HCT116 (cell line): ENCODE measurements at regions of chr11 and their contacts with region 1.

Region 1: DNA sequence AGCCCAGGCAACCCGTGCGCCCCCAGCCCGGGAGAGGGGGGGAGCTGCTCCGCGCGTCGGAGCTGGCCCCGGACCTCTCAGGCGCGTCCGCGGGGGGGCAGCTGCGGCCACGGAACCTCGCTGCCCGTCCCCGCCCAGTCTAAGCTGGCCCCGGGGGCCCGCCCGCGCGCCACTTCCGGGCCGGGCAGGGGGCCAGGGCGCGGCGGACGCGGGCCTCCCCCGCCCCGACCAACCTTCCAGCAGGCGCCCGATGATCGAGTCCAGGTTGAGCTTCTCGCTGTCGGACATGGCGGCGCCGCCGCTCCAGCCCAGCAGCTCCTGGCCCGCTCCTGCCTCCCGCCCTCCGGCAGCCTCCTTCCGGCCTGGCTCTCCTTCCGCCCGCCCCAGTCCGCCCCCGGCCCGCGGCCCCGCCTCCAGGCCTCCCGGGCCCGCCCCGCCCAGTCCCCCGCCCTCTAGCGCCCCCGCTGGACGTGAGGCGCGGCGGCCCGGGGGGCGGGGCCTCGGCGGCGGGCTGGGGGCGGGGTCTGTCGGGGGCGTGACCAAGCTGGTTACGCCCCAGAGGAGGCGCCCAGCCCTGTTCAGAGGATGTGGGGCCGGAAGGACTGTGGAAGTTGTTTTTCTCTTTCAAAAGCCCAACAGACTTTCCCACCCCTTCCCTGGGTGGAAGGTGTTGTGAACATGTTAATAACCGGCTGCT is at the start of gene PPP1CA:
- DNase-seq: peak; percentile 53
- ATAC-seq: peak; percentile 90
- H3K4me3 ChIP-seq: peak within 1 kb of the TSS; percentile 82 to 90
- H3K27ac ChIP-seq: peak within 1 kb of the TSS; percentile 99
- H3K4me1 ChIP-seq: peaks cover 9 to 18% of the 10 kb centered on the region in 2 experiments
- H3K27me3 ChIP-seq: no peaks in the 10 kb centered on the region
- CTCF ChIP-seq: peak in 1 of 3 experiments; percentile 33; a peak in 3 of 6 replicates
- POLR2A ChIP-seq: peak; percentile 24
- RAD21 ChIP-seq: peak; percentile 48
- total RNA-seq, gene PPP1CA: 238 TPM

Region 2: DNA sequence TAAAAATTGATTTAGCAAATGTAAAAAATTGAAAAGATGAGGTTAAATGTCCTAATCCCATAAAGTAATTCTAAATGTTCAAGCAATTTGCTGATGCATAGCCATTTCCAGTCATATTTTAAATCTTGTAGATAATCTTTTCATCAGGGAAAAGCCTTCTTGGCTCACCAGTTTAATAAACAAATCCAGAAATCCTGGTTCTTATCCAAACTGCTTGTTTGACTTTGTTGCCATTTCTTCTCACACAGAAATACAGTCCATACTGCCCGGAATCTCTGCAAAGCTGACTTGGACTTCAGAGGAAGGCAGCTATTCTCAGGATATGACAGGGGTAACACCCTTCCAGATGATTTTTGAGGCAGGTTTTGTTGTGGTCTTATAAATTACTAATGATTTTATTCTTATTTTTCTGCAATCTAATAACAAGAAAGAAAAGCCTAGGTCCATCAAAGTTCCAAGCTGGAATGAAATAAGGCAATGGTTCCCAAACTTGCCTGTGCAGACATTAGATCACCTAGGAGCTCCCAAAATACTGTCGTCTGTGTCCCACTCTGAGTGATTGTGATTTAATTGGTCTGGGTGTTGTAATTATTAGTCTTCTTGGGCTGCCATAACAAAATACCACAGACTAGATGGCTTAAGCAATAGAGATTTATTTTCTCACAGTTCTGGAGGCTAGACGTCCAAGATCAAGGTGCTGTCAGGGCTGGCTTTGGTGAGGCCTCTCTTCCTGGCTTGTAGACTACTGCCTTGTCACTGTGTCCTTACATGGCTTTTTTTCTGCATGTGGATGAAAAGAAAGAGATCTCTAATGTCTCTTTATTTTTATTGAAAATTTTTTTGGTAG is 613.5 kb before region 1 on chr11:
- CTCF ChIA-PET with region 1: no interaction called
- POLR2A ChIA-PET with region 1: no interaction called
- RAD21 ChIA-PET with region 1: no interaction called
- intact Hi-C with region 1: no loop called
- DNase-seq: no peak
- ATAC-seq: no peak
- H3K4me3 ChIP-seq: no peak overlapping the region
- H3K27ac ChIP-seq: no peak overlapping the region
- H3K4me1 ChIP-seq: peaks cover 0 to 8% of the 10 kb centered on the region in 2 experiments; a peak in 1 of 4 replicates
- H3K27me3 ChIP-seq: no peaks in the 10 kb centered on the region
- CTCF ChIP-seq: no peak
- POLR2A ChIP-seq: no peak
- RAD21 ChIP-seq: no peak

Region 3: DNA sequence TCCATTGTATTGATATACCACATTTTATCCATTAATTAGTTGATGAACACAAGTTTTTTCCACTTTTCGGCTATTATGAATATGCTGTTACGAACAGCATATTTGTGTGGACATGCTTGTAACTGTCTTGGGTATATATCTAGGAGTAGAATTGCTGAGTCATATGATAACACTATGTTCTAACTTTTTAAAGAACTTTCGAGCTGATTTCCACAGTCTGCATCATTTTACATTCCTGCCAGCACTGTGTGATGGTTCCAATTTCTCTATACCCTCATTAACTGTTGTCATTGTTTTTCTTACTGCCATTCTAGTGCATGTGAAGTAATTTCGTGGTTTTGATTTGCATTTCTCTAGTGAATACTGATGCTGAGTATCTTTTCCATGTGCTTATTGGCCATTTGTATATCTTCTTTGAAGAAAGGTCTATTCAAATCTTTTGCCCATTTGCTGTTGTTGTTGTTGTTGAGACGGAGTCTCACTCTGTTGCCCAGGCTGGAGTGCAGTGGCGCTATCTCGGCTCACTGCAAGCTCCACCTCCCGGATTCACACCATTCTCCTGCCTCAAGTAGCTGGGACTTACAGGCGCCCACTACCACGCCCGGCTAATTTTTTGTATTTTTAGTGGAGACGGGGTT is 565.8 kb before region 1 on chr11:
- CTCF ChIA-PET with region 1: no interaction called
- POLR2A ChIA-PET with region 1: no interaction called
- RAD21 ChIA-PET with region 1: no interaction called
- intact Hi-C with region 1: no loop called
- DNase-seq: no peak
- ATAC-seq: no peak
- H3K4me3 ChIP-seq: no peak overlapping the region
- H3K27ac ChIP-seq: no peak overlapping the region
- H3K4me1 ChIP-seq: no peaks in the 10 kb centered on the region
- H3K27me3 ChIP-seq: no peaks in the 10 kb centered on the region
- CTCF ChIP-seq: no peak
- POLR2A ChIP-seq: no peak
- RAD21 ChIP-seq: no peak

Region 4: DNA sequence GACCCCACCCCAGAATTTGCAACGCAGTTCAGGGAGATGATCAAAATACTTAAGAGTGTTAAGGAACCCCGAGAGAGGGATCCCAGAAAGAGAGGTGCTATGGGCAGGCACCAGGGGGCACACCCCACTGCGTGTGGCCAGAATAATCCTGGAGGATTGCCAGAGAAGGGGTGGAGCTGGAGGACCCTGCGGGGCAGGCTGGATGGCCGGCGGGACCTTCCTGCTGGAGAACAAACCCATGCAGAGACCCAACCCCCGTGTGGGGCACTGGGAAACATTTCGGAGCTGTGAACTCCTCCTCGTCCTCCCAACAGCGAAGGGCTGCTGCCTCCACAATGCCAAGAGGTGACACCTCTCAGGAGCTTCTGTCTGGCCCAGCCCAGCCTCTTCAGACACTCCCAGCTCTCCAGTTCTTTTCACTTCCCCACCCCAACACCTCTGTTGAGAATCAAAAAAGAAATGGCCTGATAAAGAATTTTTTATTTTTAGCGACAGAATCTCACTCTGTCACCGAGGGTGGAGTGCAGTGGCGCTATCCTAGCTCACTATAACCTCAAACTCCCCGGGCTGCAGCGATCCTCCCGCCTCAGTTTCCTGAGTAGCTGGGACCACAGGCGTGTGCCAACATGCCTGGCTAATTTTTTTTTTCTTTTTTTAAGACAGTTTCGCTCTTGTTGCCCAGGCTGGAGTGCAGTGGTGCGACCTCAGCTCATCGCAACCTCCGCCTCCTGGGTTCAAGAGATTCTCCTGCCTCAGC is 319.4 kb before region 1 on chr11:
- CTCF ChIA-PET with region 1: no interaction called
- POLR2A ChIA-PET with region 1: no interaction called
- RAD21 ChIA-PET with region 1: no interaction called
- intact Hi-C with region 1: no loop called
- DNase-seq: no peak
- ATAC-seq: peak; percentile 16
- H3K4me3 ChIP-seq: peak overlapping the region in 1 of 2 experiments; percentile 24; a peak in 2 of 4 replicates
- H3K27ac ChIP-seq: no peak overlapping the region
- H3K4me1 ChIP-seq: peaks cover 25 to 40% of the 10 kb centered on the region in 2 experiments
- H3K27me3 ChIP-seq: no peaks in the 10 kb centered on the region
- CTCF ChIP-seq: peak in 1 of 3 experiments; percentile 20; a peak in 1 of 6 replicates
- POLR2A ChIP-seq: no peak
- RAD21 ChIP-seq: peak; percentile 20; the same call in 1 of the 2 replicates

Region 5: GRCh38 chr11:67391304-67392132 is 10.1 kb before region 1 on chr11 and contains the start of gene RAD9A:
- CTCF ChIA-PET with region 1: interaction called, 17 read pairs
- POLR2A ChIA-PET with region 1: interaction called, 8 read pairs
- RAD21 ChIA-PET with region 1: interaction called in 1 of 2 experiments, 5 read pairs
- intact Hi-C with region 1: no loop called
- DNase-seq: peak; percentile 86
- ATAC-seq: peak; percentile 71
- H3K4me3 ChIP-seq: peak within 1 kb of the TSS; percentile 69
- H3K27ac ChIP-seq: peak within 1 kb of the TSS; percentile 85
- H3K4me1 ChIP-seq: peaks cover 9 to 34% of the 10 kb centered on the region in 2 experiments
- H3K27me3 ChIP-seq: no peaks in the 10 kb centered on the region
- CTCF ChIP-seq: no peak
- POLR2A ChIP-seq: no peak
- RAD21 ChIP-seq: no peak
- total RNA-seq, gene RAD9A: 49.8 TPM